ENCODE measurements at regions of chrX and their contacts with region 1.

Region 1: DNA sequence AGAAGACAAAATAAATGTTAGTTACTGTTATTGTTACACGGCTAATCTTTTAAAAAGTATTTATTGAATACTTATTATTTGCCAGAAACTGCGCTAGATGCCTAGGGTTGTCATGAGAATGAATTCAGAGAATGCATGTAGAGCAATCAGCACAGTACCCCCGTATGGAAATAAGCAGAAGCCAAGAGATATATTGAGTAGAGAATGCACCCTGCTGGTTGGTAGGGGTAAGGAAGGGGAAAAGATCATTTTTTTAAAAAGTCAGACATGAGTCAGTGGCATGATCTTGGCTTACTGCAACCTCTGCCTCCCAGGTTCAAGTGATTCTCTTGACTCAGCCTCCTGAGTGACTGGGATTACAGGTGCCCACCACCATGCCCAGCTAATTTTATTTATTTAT is 13.1 kb upstream of the DRP2 start:
- DNase-seq: no peak
- H3K4me3 ChIP-seq: no peak overlapping the region
- H3K27ac ChIP-seq: no peak overlapping the region
- H3K4me1 ChIP-seq: no peaks in the 10 kb centered on the region
- H3K27me3 ChIP-seq: no peaks in the 10 kb centered on the region
- CTCF ChIP-seq: peak; percentile 62

Region 2: GRCh38 chrX:100674705-100675104 is 531.8 kb before region 1 on chrX:
- CTCF ChIA-PET with region 1: no interaction called
- POLR2A ChIA-PET with region 1: no interaction called
- intact Hi-C with region 1: loop called (anchors 10 kb)
- DNase-seq: no peak
- H3K4me3 ChIP-seq: no peak overlapping the region
- H3K27ac ChIP-seq: no peak overlapping the region
- H3K4me1 ChIP-seq: peaks cover 15% of the 10 kb centered on the region; the same call in 1 of the 2 replicates
- H3K27me3 ChIP-seq: no peaks in the 10 kb centered on the region
- CTCF ChIP-seq: no peak

Region 3: DNA sequence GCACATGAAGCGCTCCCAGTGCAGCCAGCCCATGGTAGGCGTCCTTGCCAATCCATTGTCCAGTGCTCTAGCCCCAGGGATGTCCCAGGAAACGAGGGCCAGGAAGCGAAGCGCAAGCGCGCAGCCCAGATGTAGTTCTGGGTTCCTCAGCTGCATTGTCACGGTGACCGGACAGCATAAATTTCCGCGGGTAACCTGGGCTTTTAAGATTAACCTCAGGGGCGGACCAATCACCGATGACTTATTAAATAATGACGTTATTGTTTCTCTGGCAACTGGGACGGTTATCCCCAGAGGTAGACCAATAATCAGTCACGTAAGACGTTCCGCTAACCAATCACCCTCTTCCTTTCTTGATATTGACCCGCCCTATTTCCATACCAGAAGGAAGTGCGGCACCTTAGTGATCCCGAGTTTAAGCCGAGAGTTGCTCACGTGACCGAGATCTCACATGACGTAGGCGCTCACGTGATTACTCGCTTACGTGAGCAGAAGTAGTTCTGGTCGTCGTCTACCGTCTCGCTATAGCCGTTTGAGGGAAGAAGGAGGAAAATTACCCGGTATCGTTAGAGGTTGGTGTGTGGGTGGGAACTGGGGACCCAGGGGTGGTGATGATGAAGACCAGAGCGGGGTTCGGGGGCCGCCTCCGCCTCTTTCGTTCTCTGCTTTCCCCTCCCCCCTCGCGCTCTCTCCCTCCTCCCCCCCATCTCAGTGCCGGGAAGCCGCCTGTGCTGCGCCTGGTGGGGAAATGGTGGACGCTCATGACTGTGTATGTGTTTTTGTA is 201.5 kb after region 1 on chrX and contains the starts of genes GLA and HNRNPH2:
- CTCF ChIA-PET with region 1: no interaction called
- POLR2A ChIA-PET with region 1: no interaction called
- intact Hi-C with region 1: no loop called
- DNase-seq: peak; percentile 87 to 99
- H3K4me3 ChIP-seq: peak within 1 kb of the TSS; percentile 93
- H3K27ac ChIP-seq: peak within 1 kb of the TSS; percentile 91
- H3K4me1 ChIP-seq: peaks cover 20% of the 10 kb centered on the region
- H3K27me3 ChIP-seq: no peaks in the 10 kb centered on the region
- CTCF ChIP-seq: no peak
- total RNA-seq, gene GLA: 72.2 and 80.5 TPM in 2 replicates
- total RNA-seq, gene HNRNPH2: 61.0 and 72.9 TPM in 2 replicates